ENCODE measurements at regions of chr14 and their contacts with region 1.

Region 1: DNA sequence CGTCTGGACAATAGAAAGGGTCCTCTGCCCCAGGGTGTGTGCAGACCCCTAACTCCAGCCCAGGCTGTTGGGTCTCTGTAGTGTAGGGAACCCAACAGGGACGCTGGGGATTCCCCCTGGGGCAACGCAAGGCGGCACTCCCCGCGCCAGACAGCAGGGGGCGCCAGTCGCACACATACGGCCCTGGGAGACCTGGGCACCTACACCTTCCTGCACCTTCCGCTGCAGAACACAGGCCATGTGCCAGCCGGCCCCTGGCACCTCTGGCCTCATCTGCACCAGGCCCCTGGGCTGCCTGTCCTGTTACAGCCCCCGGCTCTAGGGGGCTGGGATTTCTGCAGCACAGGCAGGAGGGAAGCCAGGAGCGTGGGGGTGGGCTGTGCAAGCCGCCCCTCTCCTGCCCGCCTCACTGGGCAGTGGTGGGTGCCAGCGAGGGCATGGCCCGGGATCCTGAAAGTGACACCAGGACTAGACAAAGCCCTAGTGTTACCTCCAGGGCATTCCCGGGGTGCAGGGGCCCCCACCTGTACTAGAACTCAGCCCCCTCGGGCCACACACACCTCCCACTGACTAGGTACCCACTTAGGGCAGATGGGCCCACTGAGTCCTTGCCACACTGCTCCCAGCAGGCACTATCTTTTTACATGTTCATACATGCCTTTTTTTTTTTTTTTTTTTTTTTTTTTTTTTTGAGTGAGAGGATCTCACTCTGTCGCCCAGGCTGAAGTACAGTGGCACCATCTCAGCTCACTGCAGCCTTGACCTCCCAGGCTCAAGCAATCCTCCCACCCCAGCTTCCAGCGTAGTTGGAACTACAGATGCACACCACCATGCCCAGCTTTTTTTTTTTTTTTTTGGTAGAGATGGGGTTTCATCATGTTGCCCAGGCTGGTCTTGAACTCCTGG is 37.5 kb downstream of the CCNK start:
- DNase-seq: peak; percentile 72 to 97 (median 91)
- ATAC-seq: peak; percentile 81 to 94 (median 90)
- H3K4me3 ChIP-seq: no peak overlapping the region
- H3K27ac ChIP-seq: no peak overlapping the region
- H3K4me1 ChIP-seq: peaks cover 0 to 3% (median 0%) of the 10 kb centered on the region in 3 donors
- H3K27me3 ChIP-seq: no peaks in the 10 kb centered on the region
- CTCF ChIP-seq: peak; percentile 97 to 99 (median 98)

Region 2: DNA sequence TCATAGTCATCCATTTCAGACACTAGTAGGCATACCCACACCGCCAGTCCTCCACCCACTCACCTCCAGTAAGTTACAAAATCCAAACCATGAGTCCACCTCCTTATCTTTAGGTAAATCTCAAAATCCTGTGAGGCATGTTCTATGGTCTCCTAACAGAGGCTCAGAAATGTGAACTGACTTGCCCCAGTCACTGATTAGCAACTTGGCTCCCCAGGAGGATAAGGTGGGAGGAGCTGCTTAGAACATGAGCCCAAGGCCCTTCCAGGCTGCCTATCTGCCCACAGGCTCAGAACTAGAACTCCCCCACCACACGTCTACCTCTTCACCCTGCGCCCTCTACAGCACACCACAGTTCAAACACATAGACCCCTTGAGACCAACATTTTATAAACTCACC is 57.9 kb before region 1 on chr14:
- intact Hi-C with region 1: no loop called
- DNase-seq: no peak
- ATAC-seq: no peak
- H3K4me3 ChIP-seq: no peak overlapping the region
- H3K27ac ChIP-seq: no peak overlapping the region
- H3K4me1 ChIP-seq: no peaks in the 10 kb centered on the region
- H3K27me3 ChIP-seq: no peaks in the 10 kb centered on the region
- CTCF ChIP-seq: no peak

Region 3: GRCh38 chr14:99628832-99629618 is 110.3 kb after region 1 on chr14:
- intact Hi-C with region 1: loop called (anchors 2 to 10 kb)
- DNase-seq: peak; percentile 65 to 94 (median 84)
- ATAC-seq: peak; percentile 96 to 99 (median 98)
- H3K4me3 ChIP-seq: no peak overlapping the region
- H3K27ac ChIP-seq: no peak overlapping the region
- H3K4me1 ChIP-seq: peaks cover 0 to 7% (median 0%) of the 10 kb centered on the region in 3 donors
- H3K27me3 ChIP-seq: no peaks in the 10 kb centered on the region
- CTCF ChIP-seq: peak; percentile 96 to 98 (median 97)

Region 4: DNA sequence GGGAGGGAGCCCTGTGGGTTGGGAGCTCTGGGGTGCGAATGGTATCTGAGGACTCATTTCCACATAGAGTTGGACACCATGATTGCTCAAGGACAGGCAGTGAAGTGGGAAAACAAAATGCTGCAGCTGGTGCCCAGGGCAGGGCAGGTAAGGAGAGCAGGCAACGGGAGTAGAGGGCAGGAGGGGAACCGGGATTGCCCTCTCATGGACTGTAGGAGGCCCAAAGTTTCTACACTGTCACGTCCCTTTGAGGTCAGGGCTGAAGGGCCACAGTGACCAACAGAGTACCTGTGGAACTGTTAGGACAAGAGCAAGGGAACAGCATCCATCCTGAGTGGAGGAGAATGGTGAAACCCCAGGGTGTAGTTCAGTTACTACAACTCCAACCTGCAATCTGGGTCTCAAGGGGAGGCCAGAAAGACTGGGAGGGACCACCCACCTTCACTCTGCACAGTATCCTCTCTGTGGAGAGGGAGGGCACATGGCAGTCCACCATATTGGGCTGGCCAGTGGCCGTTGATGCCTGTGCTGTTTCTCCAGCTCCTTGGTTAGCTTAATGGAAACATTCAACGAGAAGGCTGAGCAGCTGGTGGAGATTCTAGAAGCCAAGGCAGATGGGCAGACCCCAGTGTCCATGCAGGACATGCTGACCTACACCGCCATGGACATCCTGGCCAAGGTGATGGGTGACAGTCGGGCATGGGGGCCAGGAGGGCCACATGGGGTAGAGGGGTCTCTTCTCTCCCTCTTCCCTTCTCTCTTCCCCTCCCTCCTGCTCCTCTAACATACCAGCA is 187.6 kb after region 1 on chr14:
- intact Hi-C with region 1: no loop called
- DNase-seq: no peak
- ATAC-seq: no peak
- H3K4me3 ChIP-seq: no peak overlapping the region
- H3K27ac ChIP-seq: no peak overlapping the region
- H3K4me1 ChIP-seq: no peaks in the 10 kb centered on the region
- H3K27me3 ChIP-seq: no peaks in the 10 kb centered on the region
- CTCF ChIP-seq: no peak